CD8-positive, alpha-beta T cell (primary cell): ENCODE measurements at regions of chr20 and their contacts with region 1.

Region 1: GRCh38 chr20:59207742-59208357 is 44.2 kb downstream of the ZNF831 start:
- DNase-seq: peak; percentile 66 to 90 (median 86)
- ATAC-seq: peak; percentile 96
- H3K4me3 ChIP-seq: no peak overlapping the region
- H3K4me3 Mint-ChIP-seq: no peak overlapping the region
- H3K27ac ChIP-seq: no peak overlapping the region
- H3K27ac Mint-ChIP-seq: peak overlapping the region; percentile 76
- H3K4me1 ChIP-seq: peaks cover 25% of the 10 kb centered on the region
- H3K4me1 Mint-ChIP-seq: peaks cover 37% of the 10 kb centered on the region
- H3K27me3 ChIP-seq: no peaks in the 10 kb centered on the region
- H3K27me3 Mint-ChIP-seq: no peaks in the 10 kb centered on the region
- CTCF ChIP-seq: peak; percentile 93

Region 2: DNA sequence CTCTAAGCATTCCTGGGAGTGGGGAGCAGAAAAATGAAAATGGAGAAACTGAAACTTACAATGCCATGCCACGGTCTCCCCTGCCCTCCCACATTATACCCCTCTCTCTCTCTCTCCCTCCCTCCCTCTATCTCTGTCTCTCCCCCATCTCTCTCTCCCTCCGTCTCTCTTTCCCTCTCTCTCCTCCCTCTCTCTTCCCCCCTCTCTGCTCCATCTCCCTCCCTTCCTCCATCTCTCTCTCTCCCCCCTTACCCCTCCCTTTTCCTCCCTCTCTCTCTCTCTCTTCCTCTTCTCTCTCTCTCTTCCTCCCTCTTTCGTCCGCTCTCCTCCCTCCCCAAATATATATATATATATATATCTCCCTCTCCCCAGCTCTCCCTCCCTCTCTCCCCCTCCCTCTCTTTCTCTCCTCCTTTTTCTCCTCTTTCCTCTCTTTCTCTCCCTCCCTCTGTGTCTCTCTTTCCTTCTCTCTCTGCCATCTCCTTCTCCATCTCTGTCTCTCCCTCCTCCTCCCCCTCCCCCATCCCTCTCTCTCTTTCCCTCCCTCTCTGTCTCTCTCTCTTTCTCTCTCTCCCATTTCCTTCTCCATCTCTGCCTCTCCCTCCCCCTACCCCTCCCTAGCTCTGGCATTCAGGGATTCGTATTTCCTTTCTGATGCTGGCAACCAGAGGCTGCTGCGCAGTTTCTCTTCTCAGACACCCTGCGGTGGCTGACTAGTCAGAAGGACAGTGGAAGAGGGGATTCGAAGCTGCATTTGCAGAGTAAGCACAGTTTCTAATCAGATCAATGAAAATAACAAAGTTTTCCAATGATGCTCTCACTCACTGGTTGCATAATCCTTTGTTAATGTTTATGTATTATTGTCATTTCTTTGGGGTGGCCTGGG is 832.7 kb before region 1 on chr20:
- CTCF ChIA-PET with region 1: no interaction called
- POLR2A ChIA-PET with region 1: no interaction called
- intact Hi-C with region 1: no loop called
- DNase-seq: no peak
- ATAC-seq: no peak
- H3K4me3 ChIP-seq: no peak overlapping the region
- H3K4me3 Mint-ChIP-seq: no peak overlapping the region
- H3K27ac ChIP-seq: no peak overlapping the region
- H3K27ac Mint-ChIP-seq: no peak overlapping the region
- H3K4me1 ChIP-seq: no peaks in the 10 kb centered on the region
- H3K4me1 Mint-ChIP-seq: no peaks in the 10 kb centered on the region
- H3K27me3 ChIP-seq: peaks cover 0 to 2% of the 10 kb centered on the region in 2 experiments
- H3K27me3 Mint-ChIP-seq: peaks cover 25% of the 10 kb centered on the region
- CTCF ChIP-seq: no peak

Region 3: GRCh38 chr20:58634521-58635278 is 573.1 kb before region 1 on chr20:
- CTCF ChIA-PET with region 1: no interaction called
- POLR2A ChIA-PET with region 1: no interaction called
- intact Hi-C with region 1: no loop called
- DNase-seq: peak in 5 of 9 experiments; percentile 39 to 56 (median 52)
- ATAC-seq: peak; percentile 77
- H3K4me3 ChIP-seq: peak overlapping the region in 1 of 2 experiments; percentile 13
- H3K4me3 Mint-ChIP-seq: peak overlapping the region; percentile 74
- H3K27ac ChIP-seq: peak overlapping the region; percentile 39 to 53
- H3K27ac Mint-ChIP-seq: peak overlapping the region; percentile 89
- H3K4me1 ChIP-seq: peaks cover 28% of the 10 kb centered on the region
- H3K4me1 Mint-ChIP-seq: peaks cover 21% of the 10 kb centered on the region
- H3K27me3 ChIP-seq: no peaks in the 10 kb centered on the region
- H3K27me3 Mint-ChIP-seq: peaks cover under 1% of the 10 kb centered on the region
- CTCF ChIP-seq: no peak

Region 4: DNA sequence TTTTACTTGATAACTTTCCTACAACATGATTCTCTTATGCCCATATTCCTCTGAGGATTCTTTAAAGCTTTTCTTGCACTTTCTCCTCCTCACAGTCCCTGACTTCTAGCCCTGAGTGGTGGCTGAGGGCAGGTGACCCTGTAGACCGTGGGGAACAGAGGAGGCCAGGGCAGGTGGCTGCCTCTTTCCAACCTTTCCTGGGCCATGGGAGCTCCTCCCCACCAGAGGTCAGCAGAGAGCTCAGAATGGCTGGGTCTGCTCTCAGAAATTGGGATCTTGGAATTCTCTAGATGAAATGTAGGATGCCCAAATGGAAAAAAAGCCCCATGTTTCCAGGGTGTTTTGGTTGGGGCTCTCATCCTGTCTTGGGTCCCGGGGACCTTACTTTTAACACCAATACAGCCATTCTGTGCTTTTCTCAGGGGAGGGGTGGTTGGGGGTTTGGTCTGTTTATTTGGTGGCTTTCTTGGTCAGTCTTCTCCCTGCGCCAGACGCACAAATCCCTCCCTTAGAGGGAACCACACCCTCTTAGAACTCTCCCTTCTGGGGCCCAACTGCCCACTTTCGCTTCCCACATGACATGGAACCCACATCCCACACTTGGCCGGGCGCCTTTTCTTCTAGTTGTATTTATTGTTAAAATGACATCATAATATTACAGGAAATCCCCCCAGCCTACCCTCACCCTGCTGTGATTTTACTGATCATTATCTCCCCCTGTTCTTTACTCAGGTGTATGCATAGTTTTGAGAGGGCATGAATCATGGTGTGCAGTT is 337.4 kb before region 1 on chr20:
- CTCF ChIA-PET with region 1: interaction called, 11 read pairs
- POLR2A ChIA-PET with region 1: no interaction called
- intact Hi-C with region 1: loop called (anchors 1 kb)
- DNase-seq: peak in 7 of 9 experiments; percentile 27 to 75 (median 65)
- ATAC-seq: peak; percentile 81
- H3K4me3 ChIP-seq: no peak overlapping the region
- H3K4me3 Mint-ChIP-seq: no peak overlapping the region
- H3K27ac ChIP-seq: no peak overlapping the region
- H3K27ac Mint-ChIP-seq: no peak overlapping the region
- H3K4me1 ChIP-seq: no peaks in the 10 kb centered on the region
- H3K4me1 Mint-ChIP-seq: peaks cover 5% of the 10 kb centered on the region
- H3K27me3 ChIP-seq: no peaks in the 10 kb centered on the region
- H3K27me3 Mint-ChIP-seq: no peaks in the 10 kb centered on the region
- CTCF ChIP-seq: peak; percentile 73

Region 5: GRCh38 chr20:59094576-59094975 is 113.3 kb before region 1 on chr20:
- CTCF ChIA-PET with region 1: interaction called, 204 read pairs
- POLR2A ChIA-PET with region 1: no interaction called
- intact Hi-C with region 1: no loop called
- DNase-seq: no peak
- ATAC-seq: no peak
- H3K4me3 ChIP-seq: no peak overlapping the region
- H3K4me3 Mint-ChIP-seq: no peak overlapping the region
- H3K27ac ChIP-seq: no peak overlapping the region
- H3K27ac Mint-ChIP-seq: no peak overlapping the region
- H3K4me1 ChIP-seq: no peaks in the 10 kb centered on the region
- H3K4me1 Mint-ChIP-seq: peaks cover 5% of the 10 kb centered on the region
- H3K27me3 ChIP-seq: no peaks in the 10 kb centered on the region
- H3K27me3 Mint-ChIP-seq: no peaks in the 10 kb centered on the region
- CTCF ChIP-seq: no peak

Region 6: DNA sequence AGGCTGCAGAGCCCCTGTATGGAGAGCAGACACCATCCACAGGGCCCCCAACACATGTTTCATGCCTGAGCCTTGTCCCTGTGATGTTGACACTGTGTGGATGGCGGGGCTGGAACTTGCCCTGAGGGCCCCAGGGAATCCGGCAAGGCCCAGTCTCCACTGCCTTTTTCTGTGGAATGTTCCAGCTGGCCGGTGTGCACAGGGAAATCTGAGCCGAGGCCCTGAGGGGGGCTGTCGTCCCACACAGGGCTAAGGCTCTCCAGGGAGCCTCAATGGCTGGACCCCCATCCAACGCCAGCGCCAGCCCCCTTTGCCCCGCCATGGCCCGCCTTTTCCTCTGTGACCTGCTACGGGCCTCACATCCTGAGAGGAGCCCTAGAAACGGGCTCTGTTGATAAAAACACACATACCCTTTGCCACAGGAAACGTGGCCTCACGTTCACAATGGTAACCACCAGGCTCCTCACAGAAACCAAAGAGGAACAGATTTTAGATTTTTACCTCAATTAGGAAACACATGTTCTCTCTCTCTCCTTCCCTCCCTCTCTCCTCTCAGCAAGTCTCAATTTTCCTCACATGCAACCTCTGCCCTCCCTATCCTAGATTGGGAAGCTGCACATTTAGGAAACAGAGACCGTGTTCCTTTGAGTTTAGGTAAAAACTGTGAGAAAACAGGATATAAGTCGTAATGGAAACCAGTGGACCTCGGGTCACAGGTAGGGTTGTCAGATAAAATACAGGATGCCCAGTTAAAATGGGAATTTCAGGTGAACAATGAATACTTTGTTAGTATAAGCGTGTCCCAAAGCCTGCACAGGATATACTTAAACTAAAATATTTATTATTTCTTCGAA is 58.0 kb before region 1 on chr20:
- CTCF ChIA-PET with region 1: interaction called, 20 read pairs
- POLR2A ChIA-PET with region 1: interaction called, 3 read pairs
- intact Hi-C with region 1: loop called (anchors 1 to 2 kb)
- DNase-seq: peak; percentile 66 to 96 (median 77)
- ATAC-seq: peak; percentile 74
- H3K4me3 ChIP-seq: peak overlapping the region in 1 of 2 experiments; percentile 21
- H3K4me3 Mint-ChIP-seq: peak overlapping the region; percentile 71
- H3K27ac ChIP-seq: peak overlapping the region; percentile 90 to 94
- H3K27ac Mint-ChIP-seq: peak overlapping the region; percentile 95
- H3K4me1 ChIP-seq: peaks cover 94% of the 10 kb centered on the region
- H3K4me1 Mint-ChIP-seq: peaks cover 94% of the 10 kb centered on the region
- H3K27me3 ChIP-seq: no peaks in the 10 kb centered on the region
- H3K27me3 Mint-ChIP-seq: no peaks in the 10 kb centered on the region
- CTCF ChIP-seq: no peak

Region 7: DNA sequence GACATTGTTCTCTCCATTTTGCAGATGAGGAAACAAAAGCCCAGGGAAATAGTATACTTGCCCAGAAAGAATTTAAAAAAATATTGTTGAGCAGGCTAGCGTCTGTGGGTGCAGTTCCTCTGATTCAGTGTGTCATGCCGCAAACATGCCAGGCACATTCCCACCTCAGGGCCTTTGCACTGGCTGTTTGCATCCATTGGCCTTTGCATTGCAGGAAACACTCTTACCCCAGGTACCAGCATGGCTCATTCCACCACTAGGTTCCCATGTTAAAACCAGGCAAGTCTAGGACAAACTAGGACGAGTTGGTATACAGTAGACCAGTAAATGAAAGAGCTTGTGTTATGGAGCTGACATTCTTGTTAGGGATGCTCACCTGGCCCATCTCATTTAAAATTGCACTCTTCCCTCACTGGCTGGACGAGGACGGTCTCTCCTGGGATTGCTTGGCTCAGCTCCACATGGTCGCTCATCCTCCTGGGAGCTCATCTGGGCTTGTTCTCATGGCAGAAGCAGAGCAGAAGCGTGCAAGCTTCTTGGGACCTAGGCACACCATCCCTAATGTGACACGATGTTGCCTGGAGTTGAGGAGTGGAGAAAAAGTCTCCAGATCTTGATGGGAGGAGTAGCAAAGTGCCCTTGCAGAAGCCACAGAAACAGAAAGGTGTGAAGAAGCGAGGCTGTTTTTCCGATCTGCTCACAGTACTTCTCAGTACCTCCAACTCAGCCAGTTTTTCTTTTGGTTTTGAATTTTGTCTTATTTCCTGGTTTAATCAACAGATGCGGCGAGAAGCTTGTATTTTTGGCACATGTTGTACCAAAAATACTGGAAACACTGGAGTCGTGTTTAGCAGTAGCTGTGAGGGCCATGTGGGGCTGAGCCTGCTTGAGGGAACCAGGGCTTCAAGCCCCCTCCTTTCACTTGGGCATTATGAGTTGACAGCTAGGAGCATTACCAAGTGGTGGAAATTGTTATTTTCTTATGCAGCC is 30.3 kb before region 1 on chr20:
- CTCF ChIA-PET with region 1: interaction called, 14 read pairs
- POLR2A ChIA-PET with region 1: no interaction called
- intact Hi-C with region 1: no loop called
- DNase-seq: peak in 5 of 9 experiments; percentile 46 to 83 (median 55)
- ATAC-seq: peak; percentile 76
- H3K4me3 ChIP-seq: peak overlapping the region in 1 of 2 experiments; percentile 26
- H3K4me3 Mint-ChIP-seq: peak overlapping the region; percentile 69
- H3K27ac ChIP-seq: peak overlapping the region; percentile 64 to 92
- H3K27ac Mint-ChIP-seq: peak overlapping the region; percentile 94
- H3K4me1 ChIP-seq: peaks cover 75% of the 10 kb centered on the region
- H3K4me1 Mint-ChIP-seq: peaks cover 94% of the 10 kb centered on the region
- H3K27me3 ChIP-seq: no peaks in the 10 kb centered on the region
- H3K27me3 Mint-ChIP-seq: no peaks in the 10 kb centered on the region
- CTCF ChIP-seq: no peak

Region 8: GRCh38 chr20:59299944-59300331 is 92.1 kb after region 1 on chr20:
- CTCF ChIA-PET with region 1: no interaction called
- POLR2A ChIA-PET with region 1: no interaction called
- intact Hi-C with region 1: no loop called
- DNase-seq: no peak
- ATAC-seq: no peak
- H3K4me3 ChIP-seq: no peak overlapping the region
- H3K4me3 Mint-ChIP-seq: peak overlapping the region; percentile 22
- H3K27ac ChIP-seq: no peak overlapping the region
- H3K27ac Mint-ChIP-seq: no peak overlapping the region
- H3K4me1 ChIP-seq: peaks cover 7% of the 10 kb centered on the region
- H3K4me1 Mint-ChIP-seq: peaks cover 22% of the 10 kb centered on the region
- H3K27me3 ChIP-seq: peaks cover 2 to 6% of the 10 kb centered on the region in 2 experiments
- H3K27me3 Mint-ChIP-seq: peaks cover 38% of the 10 kb centered on the region
- CTCF ChIP-seq: no peak